ENCODE measurements at regions of chr6 and their contacts with region 1.

Region 1: GRCh38 chr6:31546962-31547726 is at the start of gene NFKBIL1:
- DNase-seq: peak; percentile 94
- H3K4me3 ChIP-seq: peak within 1 kb of the TSS; percentile 31 to 55 (median 34)
- H3K27ac ChIP-seq: peak within 1 kb of the TSS; percentile 87
- H3K4me1 ChIP-seq: peaks cover 20% of the 10 kb centered on the region
- H3K27me3 ChIP-seq: no peaks in the 10 kb centered on the region
- CTCF ChIP-seq: no peak
- POLR2A ChIP-seq: peak; percentile 55
- total RNA-seq, gene NFKBIL1: 14.6 and 15.5 TPM in 2 replicates

Region 2: GRCh38 chr6:31493875-31494694 is 53.1 kb before region 1 on chr6:
- CTCF ChIA-PET with region 1: interaction called, 21 read pairs
- POLR2A ChIA-PET with region 1: interaction called, 3 read pairs
- dilution Hi-C with region 1: no loop called
- intact Hi-C with region 1: loop called (anchors 1 kb)
- DNase-seq: peak; percentile 86
- H3K4me3 ChIP-seq: peak overlapping the region; percentile 44 to 84 (median 58)
- H3K27ac ChIP-seq: peak overlapping the region; percentile 74
- H3K4me1 ChIP-seq: peaks cover 20% of the 10 kb centered on the region
- H3K27me3 ChIP-seq: no peaks in the 10 kb centered on the region
- CTCF ChIP-seq: peak; percentile 84 to 95
- POLR2A ChIP-seq: no peak

Region 3: DNA sequence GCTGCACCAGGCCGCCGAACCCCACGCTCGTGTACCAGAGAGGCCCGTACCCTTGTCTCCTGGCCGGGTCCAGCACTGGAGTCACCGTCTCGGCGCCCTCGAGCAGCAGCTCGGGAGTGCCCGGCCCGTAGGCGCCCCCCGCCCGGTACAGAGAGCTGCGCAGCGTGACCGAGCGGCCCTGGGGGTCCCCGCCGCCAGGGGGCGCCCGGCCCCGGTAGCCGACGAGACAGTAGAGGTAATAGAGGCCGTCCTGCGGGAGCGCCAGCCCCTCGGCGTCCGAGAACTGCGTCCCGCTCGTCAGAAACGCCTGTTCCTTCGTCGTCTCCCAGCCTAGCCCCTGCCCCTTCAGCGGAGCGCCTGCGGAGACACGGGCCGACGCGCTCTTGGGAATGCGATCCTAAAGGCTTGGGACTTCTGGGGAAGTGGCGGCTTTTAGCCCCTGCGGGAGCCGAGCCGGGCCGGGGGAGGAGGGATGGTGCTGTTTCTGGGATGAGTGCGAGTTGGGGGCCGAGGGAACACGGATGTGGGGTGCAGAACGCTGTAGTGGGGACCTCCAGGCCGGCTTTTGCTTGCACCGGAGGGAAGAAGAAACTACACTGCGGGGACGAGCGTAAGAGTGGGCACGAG is 33.8 kb after region 1 on chr6:
- CTCF ChIA-PET with region 1: interaction called, 1,517 read pairs
- POLR2A ChIA-PET with region 1: interaction called, 3 read pairs
- dilution Hi-C with region 1: no loop called
- intact Hi-C with region 1: loop called (anchors 1 kb)
- DNase-seq: peak; percentile 87
- H3K4me3 ChIP-seq: peak overlapping the region; percentile 56 to 71 (median 70)
- H3K27ac ChIP-seq: peak overlapping the region; percentile 55
- H3K4me1 ChIP-seq: peaks cover 16% of the 10 kb centered on the region
- H3K27me3 ChIP-seq: no peaks in the 10 kb centered on the region
- CTCF ChIP-seq: peak; percentile 99
- POLR2A ChIP-seq: peak; percentile 37

Region 4: DNA sequence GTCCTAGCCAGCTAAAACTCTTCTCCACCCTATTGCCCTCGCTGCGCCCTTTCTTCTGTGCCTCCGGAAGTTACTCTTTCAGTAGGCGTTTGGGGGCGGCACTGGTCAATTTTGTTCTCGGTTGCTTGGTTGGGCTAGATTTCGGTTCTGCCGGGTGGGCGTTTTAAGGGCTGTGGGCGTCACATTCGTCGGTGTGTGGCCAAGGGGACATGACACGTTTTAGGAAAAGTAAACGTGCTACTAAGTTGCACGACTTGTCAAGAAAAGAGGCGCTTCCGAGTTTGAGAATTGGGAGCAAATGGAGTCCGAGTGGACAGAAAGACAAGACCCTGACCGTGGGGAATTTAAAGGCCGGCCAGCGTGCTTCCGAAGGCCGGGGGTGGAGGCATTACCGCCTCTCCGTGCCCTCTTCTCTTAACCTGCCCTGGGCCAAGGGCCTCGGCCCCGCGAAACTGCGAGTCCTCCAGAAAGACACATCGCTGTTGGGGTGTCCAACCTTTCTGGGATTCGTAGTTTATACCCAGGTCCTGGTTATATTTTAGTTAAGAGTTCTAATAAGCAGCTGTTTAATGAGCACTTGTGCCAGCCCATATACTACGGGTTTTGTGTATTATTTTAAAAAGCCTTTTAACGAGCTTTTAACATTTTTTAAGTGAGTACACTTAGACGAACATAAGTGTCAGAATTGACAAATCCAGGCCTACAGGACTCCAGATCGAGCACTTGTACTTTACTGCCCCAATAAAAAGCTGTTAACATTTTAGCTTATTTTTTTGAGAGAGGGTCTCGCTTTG is 106.0 kb after region 1 on chr6:
- CTCF ChIA-PET with region 1: interaction called, 4 read pairs
- POLR2A ChIA-PET with region 1: no interaction called
- dilution Hi-C with region 1: no loop called
- intact Hi-C with region 1: loop called (anchors 1 kb)
- DNase-seq: no peak
- H3K4me3 ChIP-seq: peak overlapping the region; percentile 23 to 80 (median 62)
- H3K27ac ChIP-seq: peak overlapping the region; percentile 83
- H3K4me1 ChIP-seq: peaks cover 23% of the 10 kb centered on the region
- H3K27me3 ChIP-seq: no peaks in the 10 kb centered on the region
- CTCF ChIP-seq: no peak
- POLR2A ChIP-seq: no peak

Region 5: GRCh38 chr6:31769684-31770371 is 222.7 kb after region 1 on chr6:
- CTCF ChIA-PET with region 1: interaction called, 3 read pairs
- POLR2A ChIA-PET with region 1: no interaction called
- dilution Hi-C with region 1: no loop called
- intact Hi-C with region 1: loop called (anchors 5 kb)
- DNase-seq: peak; percentile 66
- H3K4me3 ChIP-seq: no peak overlapping the region
- H3K27ac ChIP-seq: no peak overlapping the region
- H3K4me1 ChIP-seq: no peaks in the 10 kb centered on the region
- H3K27me3 ChIP-seq: no peaks in the 10 kb centered on the region
- CTCF ChIP-seq: peak; percentile 83 to 88
- POLR2A ChIP-seq: no peak

Measured in endothelial cell of umbilical vein (primary cell).